ENCODE measurements at regions of chr16 and their contacts with region 1.

Region 1: GRCh38 chr16:50065624-50066481 is at the start of gene HEATR3:
- DNase-seq: peak; percentile 91 to 97 (median 94)
- ATAC-seq: peak; percentile 95 to 98 (median 96)
- H3K4me3 ChIP-seq: peak within 1 kb of the TSS; percentile 70 to 100 (median 91)
- H3K27ac ChIP-seq: peak within 1 kb of the TSS; percentile 81 to 100 (median 98)
- H3K4me1 ChIP-seq: peaks cover 0 to 32% (median 22%) of the 10 kb centered on the region in 12 donors
- H3K27me3 ChIP-seq: no peaks in the 10 kb centered on the region
- CTCF ChIP-seq: peak in 1 of 12 donors; percentile 22
- POLR2A ChIP-seq: peak in 1 of 2 donors; percentile 49
- total RNA-seq, gene HEATR3: 9.5 to 21.2 (median 11.9) TPM

Region 2: DNA sequence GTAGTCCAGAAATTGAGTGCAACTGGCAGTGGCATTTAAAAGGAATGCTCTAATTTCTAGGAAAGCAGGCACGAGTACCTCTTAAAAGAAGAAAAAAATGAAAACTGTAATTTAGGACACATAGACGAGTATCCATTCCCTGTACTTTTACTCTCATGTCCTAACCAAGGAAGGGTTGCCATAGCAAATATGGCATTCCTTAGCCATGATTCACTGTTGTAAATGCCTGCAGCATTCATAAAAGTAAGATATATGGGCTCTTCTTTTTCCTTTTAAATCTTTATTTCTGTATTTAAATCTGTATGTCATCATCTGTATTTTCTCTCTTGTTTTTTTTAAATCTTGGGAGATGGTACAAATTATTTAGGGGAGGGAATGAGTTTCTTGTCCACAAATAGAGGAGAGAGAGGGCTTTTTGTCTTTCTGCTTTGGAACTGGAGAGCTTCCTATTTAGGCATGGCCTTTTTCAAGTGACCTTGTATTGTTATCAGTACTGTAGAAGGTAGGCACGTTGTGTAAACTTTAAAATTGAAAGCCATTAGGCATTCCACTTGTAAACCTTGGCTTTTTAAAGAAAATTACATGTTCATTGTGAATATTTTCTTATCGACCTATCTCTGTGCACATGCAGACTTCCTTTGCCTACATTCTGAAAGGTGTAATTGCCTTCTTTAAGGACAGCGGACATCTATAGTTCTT is 137.2 kb after region 1 on chr16:
- intact Hi-C with region 1: loop called in 2 of 10 experiments (anchors 5 to 10 kb)
- DNase-seq: no peak
- ATAC-seq: peak; percentile 13 to 77 (median 53)
- H3K4me3 ChIP-seq: no peak overlapping the region
- H3K27ac ChIP-seq: peak overlapping the region in 10 of 12 donors; percentile 3 to 74 (median 34)
- H3K4me1 ChIP-seq: peaks cover 0 to 72% (median 51%) of the 10 kb centered on the region in 12 donors
- H3K27me3 ChIP-seq: no peaks in the 10 kb centered on the region
- CTCF ChIP-seq: no peak
- POLR2A ChIP-seq: no peak

Region 3: DNA sequence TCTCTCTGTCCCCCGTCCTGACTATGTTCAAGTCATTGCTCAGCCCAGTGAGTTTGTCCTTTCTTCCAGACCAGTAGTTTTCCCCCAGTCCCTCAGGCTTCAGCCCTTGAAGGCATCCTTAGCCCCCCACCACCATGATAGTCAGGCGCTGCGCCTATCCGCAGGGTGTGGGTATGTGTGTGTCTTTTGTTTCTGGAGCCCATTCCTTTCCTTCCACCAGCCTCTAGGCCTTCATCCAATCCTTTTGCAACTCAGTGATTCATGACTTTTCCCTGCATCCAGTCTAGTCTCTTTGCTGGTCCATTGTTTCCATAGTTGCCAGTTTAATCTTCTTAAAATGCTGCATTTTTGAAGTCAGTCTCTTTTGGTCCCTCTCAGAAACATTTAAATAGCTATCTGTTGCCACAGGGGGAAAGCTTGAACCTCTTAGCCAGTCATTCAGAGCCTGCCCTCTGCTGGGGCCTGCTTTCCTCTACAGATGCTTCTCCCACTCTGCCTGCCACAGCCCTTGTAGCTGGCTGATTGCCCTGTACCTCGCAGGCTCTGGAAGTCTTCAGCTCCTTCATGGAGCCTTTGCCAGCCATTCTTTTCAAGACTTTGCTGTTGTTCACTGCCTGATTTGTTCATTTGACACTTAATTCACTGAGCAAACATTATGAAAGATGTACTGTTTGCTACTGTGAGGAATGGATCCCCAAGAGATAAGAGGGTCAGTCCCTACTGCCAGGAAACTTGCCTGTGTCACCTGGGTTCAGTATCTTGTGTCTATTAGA is 144.6 kb after region 1 on chr16:
- intact Hi-C with region 1: loop called in 8 of 10 experiments (anchors 2 to 10 kb)
- DNase-seq: peak; percentile 81 to 89 (median 82)
- ATAC-seq: peak; percentile 92 to 95 (median 94)
- H3K4me3 ChIP-seq: no peak overlapping the region
- H3K27ac ChIP-seq: peak overlapping the region in 3 of 12 donors; percentile 17 to 48 (median 40)
- H3K4me1 ChIP-seq: peaks cover 2 to 54% (median 37%) of the 10 kb centered on the region in 12 donors
- H3K27me3 ChIP-seq: no peaks in the 10 kb centered on the region
- CTCF ChIP-seq: peak; percentile 52 to 88 (median 71)
- POLR2A ChIP-seq: no peak

Region 4: DNA sequence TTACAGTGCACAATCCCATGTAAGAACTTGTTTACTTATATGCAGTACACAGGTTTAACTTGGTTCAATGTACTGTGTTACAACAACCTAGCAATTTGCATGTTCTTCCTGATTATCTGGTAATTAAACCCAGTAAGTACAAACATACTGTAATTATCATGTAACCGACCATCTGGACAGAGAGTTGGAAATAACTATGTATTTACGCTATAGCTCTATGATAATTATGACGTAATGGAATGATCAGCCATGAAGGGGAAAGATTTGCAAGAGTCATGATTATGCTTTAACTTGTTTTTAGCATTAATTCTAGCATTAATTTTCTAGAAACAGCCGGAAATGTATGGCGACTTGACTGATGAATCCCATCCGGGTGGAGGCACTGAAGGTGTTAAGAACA is 1160.0 kb after region 1 on chr16:
- intact Hi-C with region 1: no loop called
- DNase-seq: no peak
- ATAC-seq: no peak
- H3K4me3 ChIP-seq: no peak overlapping the region
- H3K27ac ChIP-seq: no peak overlapping the region
- H3K4me1 ChIP-seq: no peaks in the 10 kb centered on the region
- H3K27me3 ChIP-seq: peaks cover 0 to 4% (median 0%) of the 10 kb centered on the region in 9 donors
- CTCF ChIP-seq: no peak
- POLR2A ChIP-seq: no peak